CD8-positive, alpha-beta T cell (primary cell): ENCODE measurements at regions of chr9 and their contacts with region 1.

Region 1: DNA sequence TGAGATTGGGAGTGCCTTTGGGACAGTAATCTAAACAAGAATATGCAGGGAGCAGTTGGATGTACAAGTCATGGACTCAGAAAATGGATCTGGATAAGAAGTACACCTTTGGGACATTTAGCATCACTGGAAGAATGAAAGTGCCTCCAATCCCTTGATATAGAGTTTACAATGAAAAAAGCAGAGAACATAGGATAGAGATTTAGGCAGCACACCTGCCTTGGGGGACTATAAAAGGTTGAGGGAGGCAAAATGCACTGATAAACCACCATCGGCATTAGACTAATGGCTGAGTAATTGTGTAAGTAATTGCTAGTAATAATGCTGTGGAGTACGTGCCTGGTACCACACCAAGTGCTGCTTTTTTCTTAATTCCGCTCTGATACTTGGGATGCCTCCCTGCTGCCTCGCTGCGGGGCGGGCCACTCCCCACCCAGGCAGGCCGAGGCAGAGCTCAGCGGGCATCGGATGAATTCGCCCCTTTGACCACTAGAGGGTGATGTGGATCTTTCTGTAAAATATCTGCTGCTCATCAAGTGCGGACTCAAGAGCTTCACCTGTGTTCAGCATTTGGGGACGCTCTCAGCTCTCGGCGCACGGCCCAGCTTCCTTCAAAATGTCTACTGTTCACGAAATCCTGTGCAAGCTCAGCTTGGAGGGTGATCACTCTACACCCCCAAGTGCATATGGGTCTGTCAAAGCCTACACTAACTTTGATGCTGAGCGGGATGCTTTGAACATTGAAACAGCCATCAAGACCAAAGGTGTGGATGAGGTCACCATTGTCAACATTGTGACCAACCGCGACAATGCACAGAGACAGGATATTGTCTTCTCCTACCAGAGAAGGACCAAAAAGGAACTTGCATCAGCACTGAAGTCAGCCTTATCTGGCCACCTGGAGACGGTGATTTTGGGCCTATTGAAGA is 99.9 kb downstream of the ANKRD18B start:
- DNase-seq: peak; percentile 44 to 85 (median 64)
- ATAC-seq: peak; percentile 99
- H3K4me3 ChIP-seq: no peak overlapping the region
- H3K4me3 Mint-ChIP-seq: no peak overlapping the region
- H3K27ac ChIP-seq: no peak overlapping the region
- H3K27ac Mint-ChIP-seq: no peak overlapping the region
- H3K4me1 ChIP-seq: no peaks in the 10 kb centered on the region
- H3K4me1 Mint-ChIP-seq: peaks cover 7% of the 10 kb centered on the region
- H3K27me3 ChIP-seq: no peaks in the 10 kb centered on the region
- H3K27me3 Mint-ChIP-seq: peaks cover 23% of the 10 kb centered on the region
- CTCF ChIP-seq: peak; percentile 81

Region 2: DNA sequence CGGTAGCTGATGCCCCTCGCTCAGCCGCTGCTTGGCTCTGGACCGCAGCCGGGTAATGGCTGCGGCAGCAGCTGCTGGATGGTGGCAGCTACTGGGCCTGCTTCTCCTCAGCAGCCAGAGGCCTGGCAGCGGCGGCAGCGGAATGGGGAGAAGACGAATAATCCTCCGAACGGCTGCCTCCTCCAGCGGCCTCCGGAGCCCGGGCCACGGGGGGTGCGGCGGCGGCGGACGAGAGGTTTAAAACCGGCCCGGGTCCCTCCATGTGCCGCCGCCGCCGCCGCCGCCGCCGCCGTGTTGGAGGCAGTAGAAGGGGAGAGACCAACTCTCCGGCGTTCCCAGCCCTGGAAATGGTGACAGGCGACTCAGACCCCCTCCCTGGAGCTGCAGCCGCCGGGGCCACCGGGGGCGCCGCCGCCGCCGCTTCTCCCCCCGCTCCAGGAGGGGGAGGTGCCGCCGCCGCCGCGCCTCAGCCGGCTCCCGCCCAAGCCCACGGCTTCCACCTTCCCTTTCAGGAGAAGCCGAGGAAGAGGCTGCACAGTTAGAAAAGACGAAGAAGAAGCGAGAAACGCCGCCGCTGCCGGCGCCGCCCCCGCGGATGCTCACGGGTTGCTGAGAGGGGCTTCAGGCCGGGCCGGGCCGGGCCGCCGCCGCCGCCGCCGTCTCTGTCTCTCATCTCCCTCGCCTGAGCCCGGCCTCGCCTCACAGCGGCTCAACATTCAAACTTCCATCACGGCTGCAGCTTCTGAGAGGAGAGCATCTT is 53.0 kb after region 1 on chr9:
- CTCF ChIA-PET with region 1: no interaction called
- POLR2A ChIA-PET with region 1: no interaction called
- intact Hi-C with region 1: loop called in 1 of 2 experiments (anchors 5 kb)
- DNase-seq: peak in 7 of 9 experiments; percentile 1 to 55 (median 17)
- ATAC-seq: peak; percentile 49
- H3K4me3 ChIP-seq: peak overlapping the region; percentile 33 to 43
- H3K4me3 Mint-ChIP-seq: peak overlapping the region; percentile 91
- H3K27ac ChIP-seq: no peak overlapping the region
- H3K27ac Mint-ChIP-seq: no peak overlapping the region
- H3K4me1 ChIP-seq: no peaks in the 10 kb centered on the region
- H3K4me1 Mint-ChIP-seq: peaks cover 9% of the 10 kb centered on the region
- H3K27me3 ChIP-seq: peaks cover 0 to 14% of the 10 kb centered on the region in 2 experiments
- H3K27me3 Mint-ChIP-seq: peaks cover 67% of the 10 kb centered on the region
- CTCF ChIP-seq: no peak

Region 3: GRCh38 chr9:33721674-33722358 is 97.9 kb after region 1 on chr9:
- CTCF ChIA-PET with region 1: interaction called, 209 read pairs
- POLR2A ChIA-PET with region 1: interaction called, 5 read pairs
- intact Hi-C with region 1: loop called (anchors 1 kb)
- DNase-seq: peak; percentile 75 to 94 (median 87)
- ATAC-seq: peak; percentile 87
- H3K4me3 ChIP-seq: no peak overlapping the region
- H3K4me3 Mint-ChIP-seq: no peak overlapping the region
- H3K27ac ChIP-seq: no peak overlapping the region
- H3K27ac Mint-ChIP-seq: no peak overlapping the region
- H3K4me1 ChIP-seq: no peaks in the 10 kb centered on the region
- H3K4me1 Mint-ChIP-seq: no peaks in the 10 kb centered on the region
- H3K27me3 ChIP-seq: no peaks in the 10 kb centered on the region
- H3K27me3 Mint-ChIP-seq: peaks cover 15% of the 10 kb centered on the region
- CTCF ChIP-seq: peak; percentile 100

Region 4: GRCh38 chr9:33728613-33729012 is 104.7 kb after region 1 on chr9:
- CTCF ChIA-PET with region 1: interaction called, 209 read pairs
- POLR2A ChIA-PET with region 1: no interaction called
- intact Hi-C with region 1: no loop called
- DNase-seq: no peak
- ATAC-seq: no peak
- H3K4me3 ChIP-seq: no peak overlapping the region
- H3K4me3 Mint-ChIP-seq: no peak overlapping the region
- H3K27ac ChIP-seq: no peak overlapping the region
- H3K27ac Mint-ChIP-seq: no peak overlapping the region
- H3K4me1 ChIP-seq: no peaks in the 10 kb centered on the region
- H3K4me1 Mint-ChIP-seq: no peaks in the 10 kb centered on the region
- H3K27me3 ChIP-seq: no peaks in the 10 kb centered on the region
- H3K27me3 Mint-ChIP-seq: peaks cover 23% of the 10 kb centered on the region
- CTCF ChIP-seq: no peak

Region 5: GRCh38 chr9:33778700-33779351 is 154.9 kb after region 1 on chr9:
- CTCF ChIA-PET with region 1: interaction called, 24 read pairs
- POLR2A ChIA-PET with region 1: no interaction called
- intact Hi-C with region 1: loop called (anchors 1 kb)
- DNase-seq: peak in 8 of 9 experiments; percentile 20 to 77 (median 42)
- ATAC-seq: peak; percentile 95
- H3K4me3 ChIP-seq: no peak overlapping the region
- H3K4me3 Mint-ChIP-seq: no peak overlapping the region
- H3K27ac ChIP-seq: no peak overlapping the region
- H3K27ac Mint-ChIP-seq: no peak overlapping the region
- H3K4me1 ChIP-seq: no peaks in the 10 kb centered on the region
- H3K4me1 Mint-ChIP-seq: peaks cover 3% of the 10 kb centered on the region
- H3K27me3 ChIP-seq: no peaks in the 10 kb centered on the region
- H3K27me3 Mint-ChIP-seq: peaks cover 6% of the 10 kb centered on the region
- CTCF ChIP-seq: peak; percentile 85

Region 6: GRCh38 chr9:33852216-33852826 is 228.4 kb after region 1 on chr9:
- CTCF ChIA-PET with region 1: no interaction called
- POLR2A ChIA-PET with region 1: no interaction called
- intact Hi-C with region 1: loop called (anchors 1 to 5 kb)
- DNase-seq: peak; percentile 22 to 76 (median 61)
- ATAC-seq: peak; percentile 68
- H3K4me3 ChIP-seq: no peak overlapping the region
- H3K4me3 Mint-ChIP-seq: no peak overlapping the region
- H3K27ac ChIP-seq: no peak overlapping the region
- H3K27ac Mint-ChIP-seq: peak overlapping the region; percentile 53
- H3K4me1 ChIP-seq: peaks cover 7% of the 10 kb centered on the region
- H3K4me1 Mint-ChIP-seq: peaks cover 51% of the 10 kb centered on the region
- H3K27me3 ChIP-seq: no peaks in the 10 kb centered on the region
- H3K27me3 Mint-ChIP-seq: no peaks in the 10 kb centered on the region
- CTCF ChIP-seq: peak; percentile 60